Caco-2 (cell line): ENCODE measurements at regions of chr12 and their contacts with region 1.

Region 1: GRCh38 chr12:1117970-1118563 is 127.0 kb downstream of the ERC1 start:
- DNase-seq: peak; percentile 72 to 79
- H3K4me3 ChIP-seq: no peak overlapping the region
- H3K4me3 Mint-ChIP-seq: no peak overlapping the region
- H3K27ac Mint-ChIP-seq: no peak overlapping the region
- H3K4me1 ChIP-seq: no peaks in the 10 kb centered on the region
- H3K4me1 Mint-ChIP-seq: peaks cover 4% of the 10 kb centered on the region
- H3K27me3 ChIP-seq: no peaks in the 10 kb centered on the region
- H3K27me3 Mint-ChIP-seq: no peaks in the 10 kb centered on the region
- CTCF ChIP-seq: peak; percentile 97 to 99

Region 2: GRCh38 chr12:977156-977555 is 140.9 kb before region 1 on chr12:
- CTCF ChIA-PET with region 1: no interaction called
- POLR2A ChIA-PET with region 1: no interaction called
- intact Hi-C with region 1: no loop called
- DNase-seq: no peak
- H3K4me3 ChIP-seq: no peak overlapping the region
- H3K4me3 Mint-ChIP-seq: no peak overlapping the region
- H3K27ac Mint-ChIP-seq: no peak overlapping the region
- H3K4me1 ChIP-seq: no peaks in the 10 kb centered on the region
- H3K4me1 Mint-ChIP-seq: no peaks in the 10 kb centered on the region
- H3K27me3 ChIP-seq: no peaks in the 10 kb centered on the region
- H3K27me3 Mint-ChIP-seq: no peaks in the 10 kb centered on the region
- CTCF ChIP-seq: no peak

Region 3: GRCh38 chr12:1279050-1279449 is 161.0 kb after region 1 on chr12:
- CTCF ChIA-PET with region 1: no interaction called
- POLR2A ChIA-PET with region 1: no interaction called
- intact Hi-C with region 1: loop called (anchors 10 kb)
- DNase-seq: no peak
- H3K4me3 ChIP-seq: no peak overlapping the region
- H3K4me3 Mint-ChIP-seq: no peak overlapping the region
- H3K27ac Mint-ChIP-seq: no peak overlapping the region
- H3K4me1 ChIP-seq: peaks cover 10% of the 10 kb centered on the region; the same call in 1 of the 2 replicates
- H3K4me1 Mint-ChIP-seq: peaks cover 14% of the 10 kb centered on the region
- H3K27me3 ChIP-seq: no peaks in the 10 kb centered on the region
- H3K27me3 Mint-ChIP-seq: no peaks in the 10 kb centered on the region
- CTCF ChIP-seq: peak in 1 of 2 experiments; percentile 13

Region 4: DNA sequence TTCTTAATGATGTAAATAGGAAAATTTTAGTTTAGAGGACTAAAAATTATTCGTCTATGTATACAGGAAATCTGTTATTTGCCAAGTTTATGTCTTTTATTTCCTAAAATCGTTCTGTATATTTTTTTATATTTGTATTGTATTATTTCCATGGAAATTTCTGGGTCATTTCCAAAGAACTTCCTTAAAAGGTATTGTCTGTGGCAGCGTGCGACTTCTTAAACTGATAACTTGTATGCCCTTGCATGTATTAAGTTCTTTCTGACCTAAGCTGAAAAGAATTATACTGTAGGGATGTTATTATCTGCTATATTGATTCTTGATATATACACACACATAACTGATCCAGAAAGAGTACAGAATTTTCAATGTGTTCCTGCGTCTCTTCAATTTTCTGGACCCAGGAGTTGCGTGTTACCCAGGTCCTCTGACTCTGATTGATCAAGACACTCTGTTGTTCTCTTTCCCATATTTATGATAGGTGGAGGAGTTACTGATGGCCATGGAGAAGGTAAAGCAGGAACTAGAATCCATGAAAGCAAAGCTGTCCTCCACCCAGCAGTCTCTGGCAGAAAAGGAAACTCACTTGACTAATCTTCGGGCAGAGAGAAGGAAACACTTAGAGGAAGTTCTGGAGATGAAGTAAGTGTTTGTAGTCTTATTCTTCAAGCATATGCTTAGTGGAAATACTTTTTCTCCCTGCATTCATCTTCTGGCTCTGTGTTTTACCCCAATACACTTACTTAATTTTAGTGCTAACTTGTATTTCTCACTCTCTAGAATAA is 171.5 kb after region 1 on chr12:
- CTCF ChIA-PET with region 1: no interaction called
- POLR2A ChIA-PET with region 1: no interaction called
- intact Hi-C with region 1: no loop called
- DNase-seq: no peak
- H3K4me3 ChIP-seq: no peak overlapping the region
- H3K4me3 Mint-ChIP-seq: no peak overlapping the region
- H3K27ac Mint-ChIP-seq: no peak overlapping the region
- H3K4me1 ChIP-seq: 0 out of 2 replicates have a peak, but pooled peaks cover under 1% of the 10 kb centered on the region
- H3K4me1 Mint-ChIP-seq: no peaks in the 10 kb centered on the region
- H3K27me3 ChIP-seq: no peaks in the 10 kb centered on the region
- H3K27me3 Mint-ChIP-seq: no peaks in the 10 kb centered on the region
- CTCF ChIP-seq: no peak

Region 5: GRCh38 chr12:1553987-1554982 is 436.2 kb after region 1 on chr12:
- CTCF ChIA-PET with region 1: interaction called, 10 read pairs
- POLR2A ChIA-PET with region 1: no interaction called
- intact Hi-C with region 1: no loop called
- DNase-seq: no peak
- H3K4me3 ChIP-seq: no peak overlapping the region
- H3K4me3 Mint-ChIP-seq: no peak overlapping the region
- H3K27ac Mint-ChIP-seq: no peak overlapping the region
- H3K4me1 ChIP-seq: no peaks in the 10 kb centered on the region
- H3K4me1 Mint-ChIP-seq: peaks cover 7% of the 10 kb centered on the region
- H3K27me3 ChIP-seq: no peaks in the 10 kb centered on the region
- H3K27me3 Mint-ChIP-seq: peaks cover 6% of the 10 kb centered on the region
- CTCF ChIP-seq: no peak

Region 6: DNA sequence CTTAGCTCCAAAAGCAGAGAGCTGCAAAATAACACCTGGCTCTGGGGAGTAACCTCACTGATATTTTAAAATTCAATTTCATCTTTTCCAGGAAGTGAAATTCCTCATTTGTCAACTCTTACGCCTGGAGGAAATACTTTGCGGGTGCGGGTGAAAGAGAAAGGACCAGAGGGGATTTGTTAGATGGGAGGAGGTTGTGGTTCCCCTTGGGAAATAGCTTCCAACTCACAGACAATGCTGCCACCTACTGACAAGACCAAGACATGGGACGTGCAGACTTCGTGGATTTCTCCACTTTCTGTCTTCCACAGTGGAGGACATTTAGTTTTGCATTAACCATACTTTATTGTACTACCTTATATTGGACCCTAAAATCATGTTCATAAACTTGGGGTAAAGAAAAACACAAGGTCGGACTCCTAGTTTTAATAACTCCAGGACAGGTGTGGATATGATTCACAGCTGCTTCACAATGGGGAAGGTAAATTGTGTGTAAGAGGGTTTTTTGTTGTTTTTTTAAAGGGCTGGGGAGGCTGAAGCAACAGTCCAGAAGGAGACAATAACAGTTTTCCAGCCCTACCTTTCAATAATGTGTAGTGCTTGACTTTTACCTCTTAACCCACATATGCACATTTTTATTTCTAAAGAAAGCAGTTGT is 465.5 kb after region 1 on chr12:
- CTCF ChIA-PET with region 1: interaction called, 91 read pairs
- POLR2A ChIA-PET with region 1: no interaction called
- intact Hi-C with region 1: no loop called
- DNase-seq: peak; percentile 82 to 87
- H3K4me3 ChIP-seq: no peak overlapping the region
- H3K4me3 Mint-ChIP-seq: no peak overlapping the region
- H3K27ac Mint-ChIP-seq: no peak overlapping the region
- H3K4me1 ChIP-seq: no peaks in the 10 kb centered on the region
- H3K4me1 Mint-ChIP-seq: peaks cover 3% of the 10 kb centered on the region
- H3K27me3 ChIP-seq: no peaks in the 10 kb centered on the region
- H3K27me3 Mint-ChIP-seq: no peaks in the 10 kb centered on the region
- CTCF ChIP-seq: peak; percentile 88 to 99